Esophagus squamous epithelium (tissue), 5 donors: ENCODE measurements at regions of chr12 and their contacts with region 1.

Region 1: DNA sequence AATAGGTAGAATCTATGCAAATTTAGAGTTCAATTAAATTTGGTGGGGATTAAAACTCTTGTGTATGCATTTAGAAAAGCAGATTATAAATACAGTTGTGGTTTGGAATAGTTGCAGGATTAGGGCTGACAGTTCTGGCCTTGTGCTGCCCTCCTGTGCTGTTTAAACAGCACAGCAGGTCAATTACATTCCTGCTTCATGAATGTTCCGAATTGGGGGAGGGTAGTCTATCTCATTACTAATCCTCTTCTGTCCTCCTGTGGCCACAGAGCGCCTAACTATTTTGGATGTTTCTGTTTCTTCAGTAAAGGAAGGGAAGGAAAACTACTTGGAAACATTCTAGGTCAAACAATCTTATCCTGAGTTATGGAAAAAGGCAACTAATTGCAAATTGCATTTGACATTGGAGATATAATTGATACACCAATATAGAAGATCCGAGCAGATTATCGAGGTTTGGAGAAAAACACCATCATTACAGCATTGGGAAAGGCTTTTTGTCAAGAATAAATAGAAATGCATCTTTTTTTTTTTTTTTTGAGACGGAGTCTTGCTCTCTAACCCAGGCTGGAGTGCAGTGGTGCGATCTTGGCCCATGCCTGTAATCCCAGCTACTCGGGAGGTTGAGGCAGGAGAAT is 8.7 kb upstream of the GPR19 start:
- DNase-seq: no peak
- H3K4me3 ChIP-seq: no peak overlapping the region
- H3K27ac ChIP-seq: peak overlapping the region in 2 of 4 donors; percentile 5 to 17
- H3K4me1 ChIP-seq: peaks cover 5 to 15% (median 8%) of the 10 kb centered on the region in 3 donors
- H3K27me3 ChIP-seq: no peaks in the 10 kb centered on the region
- CTCF ChIP-seq: peak; percentile 69 to 97 (median 84)
- POLR2A ChIP-seq: no peak

Region 2: GRCh38 chr12:12376646-12377448 is 327.9 kb before region 1 on chr12:
- intact Hi-C with region 1: loop called (anchors 10 kb)
- DNase-seq: no peak
- H3K4me3 ChIP-seq: no peak overlapping the region
- H3K27ac ChIP-seq: no peak overlapping the region
- H3K4me1 ChIP-seq: peaks cover 0 to 13% (median 0%) of the 10 kb centered on the region in 3 donors
- H3K27me3 ChIP-seq: no peaks in the 10 kb centered on the region
- CTCF ChIP-seq: peak; percentile 69 to 92 (median 75)
- POLR2A ChIP-seq: no peak

Region 3: DNA sequence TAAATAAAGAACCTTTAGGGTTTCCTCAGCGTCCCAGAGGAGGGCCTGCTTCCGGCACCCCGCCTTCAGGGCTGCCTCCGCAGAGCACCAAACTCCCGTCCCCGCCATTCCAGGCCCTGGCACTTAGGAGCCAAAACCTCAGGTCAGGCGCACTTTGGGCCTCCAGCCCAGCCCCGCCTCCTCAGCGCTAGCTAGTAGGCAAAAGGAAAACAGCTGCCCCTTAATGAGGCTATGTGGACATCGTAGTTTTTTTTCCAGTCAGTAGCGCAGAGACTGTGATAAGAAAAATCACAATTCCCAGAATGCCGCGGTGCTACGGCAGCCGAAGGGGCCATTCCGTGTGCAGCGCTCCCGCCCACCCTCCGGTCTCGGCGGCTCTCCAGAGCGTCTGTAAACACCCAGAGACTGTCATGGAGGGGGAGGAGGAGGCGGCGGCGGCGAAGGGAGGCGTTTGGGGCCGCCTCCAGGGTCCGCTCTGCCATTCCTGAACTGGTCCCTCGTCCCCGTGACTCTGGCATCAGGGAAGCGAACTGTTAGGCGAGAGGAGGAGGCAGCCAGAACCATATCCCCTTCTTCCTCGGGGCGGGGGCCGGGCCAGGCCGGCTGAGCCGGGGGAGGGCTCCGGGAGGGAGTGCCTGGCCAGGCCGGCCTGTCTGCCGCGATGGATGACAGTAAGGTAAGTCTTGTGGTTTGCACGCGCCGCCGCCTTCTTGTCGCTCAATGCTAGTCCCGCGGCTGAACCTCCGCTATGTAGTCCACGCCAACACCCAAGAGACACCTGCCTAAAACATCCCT is 93.0 kb before region 1 on chr12 and contains the start of gene CREBL2:
- intact Hi-C with region 1: loop called (anchors 10 kb)
- DNase-seq: peak; percentile 82
- H3K4me3 ChIP-seq: peak within 1 kb of the TSS; percentile 56 to 95 (median 84)
- H3K27ac ChIP-seq: peak within 1 kb of the TSS; percentile 86 to 99 (median 96)
- H3K4me1 ChIP-seq: peaks cover 10 to 68% (median 16%) of the 10 kb centered on the region in 3 donors
- H3K27me3 ChIP-seq: no peaks in the 10 kb centered on the region
- CTCF ChIP-seq: no peak
- POLR2A ChIP-seq: peak in 3 of 4 donors; percentile 64 to 83 (median 65)
- total RNA-seq, gene CREBL2: 9.4 to 30.7 (median 17.3) TPM